ENCODE measurements at regions of chr10 and their contacts with region 1.

Region 1: GRCh38 chr10:78957471-78958039 is 111.2 kb upstream of the ZMIZ1 start:
- DNase-seq: peak; percentile 64
- H3K4me3 ChIP-seq: no peak overlapping the region
- H3K27ac ChIP-seq: no peak overlapping the region
- H3K4me1 ChIP-seq: peaks cover 19% of the 10 kb centered on the region
- H3K27me3 ChIP-seq: no peaks in the 10 kb centered on the region
- CTCF ChIP-seq: no peak

Region 2: GRCh38 chr10:78925800-78926319 is 31.7 kb before region 1 on chr10:
- CTCF ChIA-PET with region 1: no interaction called
- dilution Hi-C with region 1: no loop called
- in situ Hi-C with region 1: no loop called
- intact Hi-C with region 1: no loop called
- DNase-seq: peak; percentile 97
- H3K4me3 ChIP-seq: no peak overlapping the region
- H3K27ac ChIP-seq: no peak overlapping the region
- H3K4me1 ChIP-seq: peaks cover 23% of the 10 kb centered on the region
- H3K27me3 ChIP-seq: no peaks in the 10 kb centered on the region
- CTCF ChIP-seq: no peak

Region 3: DNA sequence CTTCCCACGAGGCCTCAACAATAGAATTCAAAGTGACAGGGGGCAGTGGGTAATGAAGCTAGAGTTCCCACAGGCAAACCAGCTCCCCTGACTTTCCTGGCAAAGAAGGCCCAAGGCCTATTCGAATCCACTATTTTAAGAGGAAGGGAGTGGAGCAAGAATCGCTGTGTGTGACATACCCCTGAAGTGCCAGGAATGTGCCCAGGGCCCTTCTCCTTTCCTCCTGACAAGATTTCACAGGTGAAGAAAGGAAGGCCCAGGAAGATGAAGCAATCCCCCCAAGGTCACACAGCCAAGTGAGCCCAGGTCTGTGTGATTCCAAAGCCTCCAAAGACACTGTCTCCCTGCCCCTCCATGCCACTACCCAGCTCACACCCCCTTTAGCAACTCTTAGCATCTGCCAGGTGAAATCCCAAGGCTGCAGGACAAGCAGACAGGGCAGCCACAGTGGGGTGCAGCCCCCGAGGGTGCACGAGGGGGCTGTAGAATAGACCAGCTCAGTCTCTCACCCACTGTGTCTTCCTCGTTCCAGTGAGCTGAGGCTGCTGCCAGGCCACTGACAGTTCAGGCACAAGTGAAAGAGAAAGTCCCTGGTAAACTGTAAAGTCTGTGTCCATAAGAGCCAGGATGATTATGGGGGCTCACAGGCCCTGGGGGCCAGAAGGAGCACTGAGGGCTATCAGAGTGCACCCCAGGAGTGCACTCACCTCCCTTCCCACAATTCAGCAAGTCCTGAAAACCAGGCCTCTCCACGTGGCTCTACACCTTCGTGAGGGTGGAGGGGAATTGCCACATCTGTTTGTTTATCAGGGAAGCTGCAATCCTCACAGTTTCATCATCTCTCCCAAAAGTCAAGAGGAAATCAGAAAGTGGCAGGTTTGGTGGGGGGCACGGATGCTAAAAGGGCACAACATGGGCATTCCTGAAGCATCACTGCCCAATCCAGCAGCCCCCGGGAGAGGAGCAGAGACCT is 40.4 kb after region 1 on chr10:
- CTCF ChIA-PET with region 1: no interaction called
- dilution Hi-C with region 1: no loop called
- in situ Hi-C with region 1: no loop called
- intact Hi-C with region 1: loop called (anchors 1 kb)
- DNase-seq: no peak
- H3K4me3 ChIP-seq: no peak overlapping the region
- H3K27ac ChIP-seq: no peak overlapping the region
- H3K4me1 ChIP-seq: no peaks in the 10 kb centered on the region
- H3K27me3 ChIP-seq: no peaks in the 10 kb centered on the region
- CTCF ChIP-seq: no peak

Measured in mammary epithelial cell (primary cell).